CD4-positive, alpha-beta memory T cell (primary cell): ENCODE measurements at regions of chr17 and their contacts with region 1.

Region 1: GRCh38 chr17:75855310-75856081 is at the start of gene WBP2:
- DNase-seq: peak; percentile 96 to 100 (median 99)
- H3K4me3 ChIP-seq: peak within 1 kb of the TSS; percentile 60 to 67
- H3K4me3 Mint-ChIP-seq: peak within 1 kb of the TSS in 6 of 8 donors; percentile 83 to 92 (median 88)
- H3K27ac ChIP-seq: peak within 1 kb of the TSS; percentile 80
- H3K27ac Mint-ChIP-seq: peak within 1 kb of the TSS in 5 of 7 donors; percentile 92 to 95 (median 94)
- H3K4me1 ChIP-seq: peaks cover 37% of the 10 kb centered on the region
- H3K4me1 Mint-ChIP-seq: peaks cover 20 to 50% (median 26%) of the 10 kb centered on the region in 4 donors
- H3K27me3 ChIP-seq: no peaks in the 10 kb centered on the region
- H3K27me3 Mint-ChIP-seq: no peaks in the 10 kb centered on the region
- total RNA-seq, gene WBP2: 159 to 160 TPM

Region 2: GRCh38 chr17:75764711-75765421 is 90.6 kb before region 1 on chr17 and contains the start of gene GALK1:
- CTCF ChIA-PET with region 1: interaction called, 46 read pairs
- POLR2A ChIA-PET with region 1: interaction called, 22 read pairs
- intact Hi-C with region 1: no loop called
- DNase-seq: peak; percentile 67 to 73 (median 72)
- H3K4me3 ChIP-seq: peak within 1 kb of the TSS; percentile 42 to 73
- H3K4me3 Mint-ChIP-seq: peak within 1 kb of the TSS; percentile 72 to 83 (median 78)
- H3K27ac ChIP-seq: peak within 1 kb of the TSS; percentile 58
- H3K27ac Mint-ChIP-seq: peak within 1 kb of the TSS; percentile 52 to 88 (median 72)
- H3K4me1 ChIP-seq: peaks cover 17% of the 10 kb centered on the region
- H3K4me1 Mint-ChIP-seq: peaks cover 6 to 26% (median 10%) of the 10 kb centered on the region in 4 donors
- H3K27me3 ChIP-seq: no peaks in the 10 kb centered on the region
- H3K27me3 Mint-ChIP-seq: no peaks in the 10 kb centered on the region
- total RNA-seq, gene GALK1: 25.7 to 25.9 TPM

Region 3: DNA sequence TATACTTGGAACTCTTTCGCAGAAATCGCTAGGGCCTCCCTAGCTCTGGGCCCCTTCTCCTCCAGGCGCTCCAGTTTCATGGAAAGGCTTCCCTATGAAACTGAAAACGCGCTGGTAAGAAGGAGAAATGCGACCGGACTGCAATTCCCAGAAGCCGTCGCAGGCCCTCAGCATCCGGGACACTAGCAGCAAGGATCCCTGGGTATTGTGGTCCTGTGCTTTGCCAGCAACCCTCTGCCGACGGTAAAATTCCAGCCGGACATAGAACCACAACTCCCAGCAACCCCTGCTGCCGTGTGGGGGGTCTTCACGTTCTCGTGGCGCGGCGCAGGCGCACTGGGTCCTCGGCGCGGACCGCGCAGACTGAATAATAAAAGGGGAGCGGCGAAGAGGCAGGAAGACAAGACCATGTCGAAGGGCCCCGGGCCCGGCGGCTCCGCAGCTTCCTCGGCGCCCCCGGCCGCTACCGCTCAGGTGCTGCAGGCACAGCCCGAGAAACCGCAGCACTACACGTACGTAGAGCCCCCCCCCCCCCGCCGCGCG is 71.0 kb before region 1 on chr17 and contains the start of gene UNK:
- CTCF ChIA-PET with region 1: interaction called, 12 read pairs
- POLR2A ChIA-PET with region 1: interaction called, 556 read pairs
- intact Hi-C with region 1: loop called (anchors 1 kb)
- DNase-seq: peak; percentile 97 to 98 (median 98)
- H3K4me3 ChIP-seq: peak within 1 kb of the TSS; percentile 66 to 83
- H3K4me3 Mint-ChIP-seq: peak within 1 kb of the TSS; percentile 88 to 97 (median 94)
- H3K27ac ChIP-seq: peak within 1 kb of the TSS; percentile 100
- H3K27ac Mint-ChIP-seq: peak within 1 kb of the TSS; percentile 95 to 100 (median 99)
- H3K4me1 ChIP-seq: peaks cover 51% of the 10 kb centered on the region
- H3K4me1 Mint-ChIP-seq: peaks cover 26 to 53% (median 42%) of the 10 kb centered on the region in 4 donors
- H3K27me3 ChIP-seq: no peaks in the 10 kb centered on the region
- H3K27me3 Mint-ChIP-seq: peaks cover under 1 to 2% of the 10 kb centered on the region in 2 donors
- total RNA-seq, gene UNK: 45.8 to 48.1 TPM

Region 4: DNA sequence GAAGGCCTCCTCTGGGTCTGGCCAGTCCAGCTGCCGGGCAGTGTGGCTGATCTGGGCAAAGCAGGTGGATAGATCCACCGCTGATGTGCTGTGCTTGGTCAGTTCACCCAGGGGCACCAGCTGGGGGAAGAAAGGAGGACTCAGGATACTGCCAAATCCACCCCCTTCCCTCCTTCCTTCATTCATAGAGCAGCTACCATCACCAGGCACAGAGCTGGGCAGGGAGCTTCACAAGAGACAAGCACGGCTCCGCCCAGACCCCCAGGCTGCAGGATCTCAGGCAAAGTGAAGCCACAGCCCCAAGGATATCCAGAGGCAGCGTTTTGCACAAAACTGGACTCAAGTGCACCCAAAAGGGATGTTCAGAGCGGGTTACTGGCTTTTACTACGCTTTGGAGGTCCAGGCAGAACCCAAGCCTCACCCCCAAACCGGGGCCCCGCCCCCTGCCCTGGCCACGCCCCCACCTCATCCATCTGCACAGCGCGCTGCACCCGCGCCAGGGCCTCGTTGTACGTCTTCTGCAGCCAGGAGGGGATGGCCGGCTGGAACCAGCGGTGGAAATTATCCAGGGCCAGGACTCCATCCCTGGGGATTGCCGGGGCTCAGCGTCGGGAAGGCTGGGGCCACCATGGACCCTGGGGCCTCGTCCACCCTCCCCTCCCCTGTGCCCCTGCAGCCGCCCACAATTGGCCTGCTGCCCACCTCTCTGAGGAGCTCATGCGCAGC is 20.4 kb before region 1 on chr17:
- CTCF ChIA-PET with region 1: interaction called, 4 read pairs
- POLR2A ChIA-PET with region 1: interaction called, 140 read pairs
- intact Hi-C with region 1: no loop called
- DNase-seq: no peak
- H3K4me3 ChIP-seq: no peak overlapping the region
- H3K4me3 Mint-ChIP-seq: peak overlapping the region in 2 of 8 donors; percentile 17 to 29
- H3K27ac ChIP-seq: peak overlapping the region; percentile 75
- H3K27ac Mint-ChIP-seq: peak overlapping the region in 5 of 7 donors; percentile 37 to 77 (median 72)
- H3K4me1 ChIP-seq: peaks cover 35% of the 10 kb centered on the region
- H3K4me1 Mint-ChIP-seq: peaks cover 19 to 42% (median 27%) of the 10 kb centered on the region in 4 donors
- H3K27me3 ChIP-seq: no peaks in the 10 kb centered on the region
- H3K27me3 Mint-ChIP-seq: no peaks in the 10 kb centered on the region

Region 5: GRCh38 chr17:75877752-75878173 is 22.3 kb after region 1 on chr17:
- CTCF ChIA-PET with region 1: interaction called, 266 read pairs
- POLR2A ChIA-PET with region 1: interaction called, 563 read pairs
- intact Hi-C with region 1: loop called (anchors 1 kb)
- DNase-seq: peak; percentile 71 to 76 (median 75)
- H3K4me3 ChIP-seq: peak overlapping the region; percentile 61 to 76
- H3K4me3 Mint-ChIP-seq: peak overlapping the region; percentile 89 to 95 (median 91)
- H3K27ac ChIP-seq: peak overlapping the region; percentile 56
- H3K27ac Mint-ChIP-seq: peak overlapping the region; percentile 88 to 97 (median 94)
- H3K4me1 ChIP-seq: peaks cover 64% of the 10 kb centered on the region
- H3K4me1 Mint-ChIP-seq: peaks cover 26 to 62% (median 45%) of the 10 kb centered on the region in 4 donors
- H3K27me3 ChIP-seq: no peaks in the 10 kb centered on the region
- H3K27me3 Mint-ChIP-seq: no peaks in the 10 kb centered on the region

Region 6: GRCh38 chr17:75978938-75979704 is 123.6 kb after region 1 on chr17 and contains the starts of genes ACOX1 and TEN1:
- CTCF ChIA-PET with region 1: no interaction called
- POLR2A ChIA-PET with region 1: interaction called, 3 read pairs
- intact Hi-C with region 1: loop called (anchors 1 kb)
- DNase-seq: peak; percentile 93 to 97 (median 95)
- H3K4me3 ChIP-seq: peak within 1 kb of the TSS; percentile 61 to 88
- H3K4me3 Mint-ChIP-seq: peak within 1 kb of the TSS; percentile 93 to 99 (median 96)
- H3K27ac ChIP-seq: peak within 1 kb of the TSS; percentile 79
- H3K27ac Mint-ChIP-seq: peak within 1 kb of the TSS; percentile 99 to 100 (median 99)
- H3K4me1 ChIP-seq: peaks cover 30% of the 10 kb centered on the region
- H3K4me1 Mint-ChIP-seq: peaks cover 18 to 57% (median 34%) of the 10 kb centered on the region in 4 donors
- H3K27me3 ChIP-seq: no peaks in the 10 kb centered on the region
- H3K27me3 Mint-ChIP-seq: no peaks in the 10 kb centered on the region
- total RNA-seq, gene ACOX1: 30.4 to 31.7 TPM
- total RNA-seq, gene TEN1: 10.2 to 16.1 TPM

Region 7: GRCh38 chr17:76072148-76072858 is 216.8 kb after region 1 on chr17 and contains the start of gene SRP68:
- CTCF ChIA-PET with region 1: no interaction called
- POLR2A ChIA-PET with region 1: no interaction called
- intact Hi-C with region 1: no loop called
- DNase-seq: peak; percentile 73 to 80 (median 77)
- H3K4me3 ChIP-seq: peak within 1 kb of the TSS; percentile 81 to 97
- H3K4me3 Mint-ChIP-seq: peak within 1 kb of the TSS; percentile 95 to 98 (median 97)
- H3K27ac ChIP-seq: peak within 1 kb of the TSS; percentile 86
- H3K27ac Mint-ChIP-seq: peak within 1 kb of the TSS; percentile 89 to 98 (median 97)
- H3K4me1 ChIP-seq: peaks cover 56% of the 10 kb centered on the region
- H3K4me1 Mint-ChIP-seq: peaks cover 31 to 60% (median 46%) of the 10 kb centered on the region in 4 donors
- H3K27me3 ChIP-seq: peaks cover 22% of the 10 kb centered on the region
- H3K27me3 Mint-ChIP-seq: peaks cover 17 to 21% of the 10 kb centered on the region in 2 donors
- total RNA-seq, gene SRP68: 86.5 to 92.4 TPM